Heart right ventricle (tissue), 16 donors: ENCODE measurements at regions of chr5 and their contacts with region 1.

Region 1: GRCh38 chr5:113692891-113693457 is 179.5 kb downstream of the YTHDC2 start:
- DNase-seq: peak in 1 of 2 donors; percentile 13
- ATAC-seq: no peak
- H3K4me3 ChIP-seq: peak overlapping the region in 1 of 10 donors; percentile 21
- H3K27ac ChIP-seq: no peak overlapping the region
- H3K4me1 ChIP-seq: peaks cover 0 to 22% (median 13%) of the 10 kb centered on the region in 9 donors
- H3K27me3 ChIP-seq: peaks cover 0 to 23% (median 15%) of the 10 kb centered on the region in 7 donors
- CTCF ChIP-seq: no peak

Region 2: DNA sequence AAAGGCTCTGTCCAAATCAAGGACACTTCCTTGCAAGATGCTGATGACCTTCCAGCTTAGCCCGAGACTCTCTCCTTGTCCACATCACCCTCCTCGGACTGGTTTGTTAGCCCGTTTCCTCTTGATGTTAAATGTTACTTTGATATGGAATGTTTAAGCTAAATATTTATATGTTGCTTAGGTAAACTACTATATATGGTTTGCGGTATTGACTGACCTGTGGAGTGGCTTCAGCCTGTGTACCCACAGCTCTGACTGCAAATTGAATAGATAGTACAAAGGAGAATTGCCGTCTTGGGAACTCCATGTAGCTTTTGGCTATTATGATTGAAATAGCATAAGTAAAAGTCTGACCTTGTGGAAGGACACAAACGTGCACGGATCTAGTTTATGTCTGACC is 242.5 kb after region 1 on chr5:
- intact Hi-C with region 1: no loop called
- DNase-seq: no peak
- ATAC-seq: no peak
- H3K4me3 ChIP-seq: no peak overlapping the region
- H3K27ac ChIP-seq: no peak overlapping the region
- H3K4me1 ChIP-seq: no peaks in the 10 kb centered on the region
- H3K27me3 ChIP-seq: no peaks in the 10 kb centered on the region
- CTCF ChIP-seq: no peak

Region 3: DNA sequence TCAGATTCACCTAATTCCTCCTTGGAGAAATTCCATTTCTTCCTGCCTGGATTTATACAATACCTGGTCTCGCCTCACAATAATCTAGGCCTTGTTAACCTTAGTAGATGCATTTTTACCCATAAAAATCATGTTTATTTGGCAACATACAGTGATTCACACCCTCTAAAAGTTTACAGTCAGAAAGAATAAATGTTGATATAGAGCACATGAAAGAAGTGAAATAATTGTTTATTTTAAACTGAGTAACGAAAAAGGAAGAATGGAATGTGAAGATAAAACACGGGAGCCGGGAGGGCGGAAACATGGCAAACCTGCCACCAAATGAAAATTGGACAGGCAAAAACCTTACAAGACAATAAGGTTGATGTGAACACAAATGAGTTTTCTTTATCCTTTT is 640.0 kb after region 1 on chr5:
- intact Hi-C with region 1: loop called in 1 of 10 experiments (anchors 5 kb)
- DNase-seq: no peak
- ATAC-seq: no peak
- H3K4me3 ChIP-seq: no peak overlapping the region
- H3K27ac ChIP-seq: no peak overlapping the region
- H3K4me1 ChIP-seq: no peaks in the 10 kb centered on the region
- H3K27me3 ChIP-seq: no peaks in the 10 kb centered on the region
- CTCF ChIP-seq: no peak